ENCODE measurements at regions of chr20 and their contacts with region 1.

Region 1: DNA sequence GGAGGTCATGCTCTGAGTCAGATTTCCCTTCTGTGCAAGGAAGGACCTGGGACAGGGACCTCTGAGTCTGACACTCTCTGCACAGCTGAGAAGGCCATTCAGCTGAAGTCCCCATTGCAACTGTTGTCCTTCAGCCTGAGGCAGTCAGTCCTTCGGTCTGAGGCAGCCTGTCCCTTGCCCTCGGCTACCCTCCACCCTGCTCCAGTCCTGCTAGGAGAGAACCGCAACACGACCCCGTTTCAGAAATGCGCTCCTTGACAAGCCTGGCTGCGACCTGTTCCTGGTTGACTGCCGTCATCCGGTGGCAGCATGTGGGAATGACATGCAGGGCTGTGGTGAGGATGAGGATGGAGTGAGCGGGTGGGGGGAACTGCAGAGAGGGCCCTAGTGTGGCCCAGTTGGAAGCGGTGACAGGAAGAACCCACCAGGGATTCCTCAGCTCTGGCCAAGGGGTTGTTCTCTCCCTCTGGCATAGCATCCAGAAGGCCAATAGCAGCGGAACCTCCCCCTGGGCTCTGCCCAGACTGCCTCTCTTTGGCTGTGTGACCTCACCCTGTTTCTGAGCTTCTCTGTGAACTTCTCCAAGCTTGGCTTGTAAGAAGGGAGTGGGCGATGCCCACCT is 40.3 kb upstream of the ANGPT4 start:
- DNase-seq: peak; percentile 55 to 88 (median 74)
- ATAC-seq: peak; percentile 94
- H3K4me3 ChIP-seq: no peak overlapping the region
- H3K4me3 Mint-ChIP-seq: no peak overlapping the region
- H3K27ac ChIP-seq: no peak overlapping the region
- H3K27ac Mint-ChIP-seq: no peak overlapping the region
- H3K4me1 ChIP-seq: peaks cover 4% of the 10 kb centered on the region
- H3K4me1 Mint-ChIP-seq: peaks cover 3% of the 10 kb centered on the region
- H3K27me3 ChIP-seq: no peaks in the 10 kb centered on the region
- H3K27me3 Mint-ChIP-seq: peaks cover 47% of the 10 kb centered on the region
- CTCF ChIP-seq: peak; percentile 99

Region 2: GRCh38 chr20:805713-806112 is 150.7 kb before region 1 on chr20:
- CTCF ChIA-PET with region 1: interaction called, 25 read pairs
- POLR2A ChIA-PET with region 1: interaction called, 3 read pairs
- intact Hi-C with region 1: no loop called
- DNase-seq: no peak
- ATAC-seq: no peak
- H3K4me3 ChIP-seq: no peak overlapping the region
- H3K4me3 Mint-ChIP-seq: no peak overlapping the region
- H3K27ac ChIP-seq: no peak overlapping the region
- H3K27ac Mint-ChIP-seq: no peak overlapping the region
- H3K4me1 ChIP-seq: no peaks in the 10 kb centered on the region
- H3K4me1 Mint-ChIP-seq: no peaks in the 10 kb centered on the region
- H3K27me3 ChIP-seq: no peaks in the 10 kb centered on the region
- H3K27me3 Mint-ChIP-seq: peaks cover 14% of the 10 kb centered on the region
- CTCF ChIP-seq: no peak

Region 3: DNA sequence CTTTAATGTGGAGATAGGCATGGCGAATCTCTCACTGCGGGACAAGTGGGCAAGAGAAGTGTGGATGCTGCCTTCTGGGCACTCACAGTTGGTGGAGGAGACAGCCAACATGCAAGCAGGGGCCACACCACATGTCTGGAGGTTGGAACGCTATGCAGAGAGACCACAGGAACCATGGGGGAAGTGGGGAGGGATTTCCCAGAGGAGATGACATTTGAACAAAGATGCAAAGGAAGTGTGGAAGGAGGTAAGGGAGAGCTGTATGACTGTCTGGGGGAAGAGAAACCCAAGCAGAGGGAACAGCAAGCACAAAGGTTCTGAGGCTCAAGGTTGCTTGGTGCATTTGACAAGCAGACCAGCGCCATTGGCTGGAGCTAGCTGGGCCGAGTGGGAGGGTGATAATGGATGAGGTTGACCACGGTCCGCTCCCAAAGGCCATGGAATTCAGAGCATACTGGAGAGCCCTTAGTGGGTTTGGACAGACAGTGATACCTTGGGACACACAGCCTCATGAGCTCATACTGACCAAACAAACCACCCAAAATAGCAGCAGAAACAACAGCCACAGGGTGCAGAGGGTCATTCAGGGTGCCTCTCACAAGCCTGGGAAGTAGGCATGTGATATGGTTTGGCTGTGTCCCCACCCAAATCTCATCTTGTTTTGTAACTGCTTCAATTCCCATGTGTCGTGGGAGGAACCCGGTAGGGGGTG is 130.6 kb before region 1 on chr20:
- CTCF ChIA-PET with region 1: interaction called, 325 read pairs
- POLR2A ChIA-PET with region 1: no interaction called
- intact Hi-C with region 1: no loop called
- DNase-seq: no peak
- ATAC-seq: no peak
- H3K4me3 ChIP-seq: no peak overlapping the region
- H3K4me3 Mint-ChIP-seq: no peak overlapping the region
- H3K27ac ChIP-seq: no peak overlapping the region
- H3K27ac Mint-ChIP-seq: no peak overlapping the region
- H3K4me1 ChIP-seq: no peaks in the 10 kb centered on the region
- H3K4me1 Mint-ChIP-seq: no peaks in the 10 kb centered on the region
- H3K27me3 ChIP-seq: no peaks in the 10 kb centered on the region
- H3K27me3 Mint-ChIP-seq: no peaks in the 10 kb centered on the region
- CTCF ChIP-seq: no peak

Region 4: GRCh38 chr20:844473-845225 is 111.8 kb before region 1 on chr20:
- CTCF ChIA-PET with region 1: interaction called, 25 read pairs
- POLR2A ChIA-PET with region 1: no interaction called
- intact Hi-C with region 1: no loop called
- DNase-seq: peak; percentile 81 to 97 (median 90)
- ATAC-seq: peak; percentile 94
- H3K4me3 ChIP-seq: peak overlapping the region; percentile 65 to 71
- H3K4me3 Mint-ChIP-seq: peak overlapping the region; percentile 94
- H3K27ac ChIP-seq: peak overlapping the region; percentile 26 to 48
- H3K27ac Mint-ChIP-seq: peak overlapping the region; percentile 84
- H3K4me1 ChIP-seq: peaks cover 52% of the 10 kb centered on the region
- H3K4me1 Mint-ChIP-seq: peaks cover 54% of the 10 kb centered on the region
- H3K27me3 ChIP-seq: no peaks in the 10 kb centered on the region
- H3K27me3 Mint-ChIP-seq: no peaks in the 10 kb centered on the region
- CTCF ChIP-seq: no peak

Region 5: DNA sequence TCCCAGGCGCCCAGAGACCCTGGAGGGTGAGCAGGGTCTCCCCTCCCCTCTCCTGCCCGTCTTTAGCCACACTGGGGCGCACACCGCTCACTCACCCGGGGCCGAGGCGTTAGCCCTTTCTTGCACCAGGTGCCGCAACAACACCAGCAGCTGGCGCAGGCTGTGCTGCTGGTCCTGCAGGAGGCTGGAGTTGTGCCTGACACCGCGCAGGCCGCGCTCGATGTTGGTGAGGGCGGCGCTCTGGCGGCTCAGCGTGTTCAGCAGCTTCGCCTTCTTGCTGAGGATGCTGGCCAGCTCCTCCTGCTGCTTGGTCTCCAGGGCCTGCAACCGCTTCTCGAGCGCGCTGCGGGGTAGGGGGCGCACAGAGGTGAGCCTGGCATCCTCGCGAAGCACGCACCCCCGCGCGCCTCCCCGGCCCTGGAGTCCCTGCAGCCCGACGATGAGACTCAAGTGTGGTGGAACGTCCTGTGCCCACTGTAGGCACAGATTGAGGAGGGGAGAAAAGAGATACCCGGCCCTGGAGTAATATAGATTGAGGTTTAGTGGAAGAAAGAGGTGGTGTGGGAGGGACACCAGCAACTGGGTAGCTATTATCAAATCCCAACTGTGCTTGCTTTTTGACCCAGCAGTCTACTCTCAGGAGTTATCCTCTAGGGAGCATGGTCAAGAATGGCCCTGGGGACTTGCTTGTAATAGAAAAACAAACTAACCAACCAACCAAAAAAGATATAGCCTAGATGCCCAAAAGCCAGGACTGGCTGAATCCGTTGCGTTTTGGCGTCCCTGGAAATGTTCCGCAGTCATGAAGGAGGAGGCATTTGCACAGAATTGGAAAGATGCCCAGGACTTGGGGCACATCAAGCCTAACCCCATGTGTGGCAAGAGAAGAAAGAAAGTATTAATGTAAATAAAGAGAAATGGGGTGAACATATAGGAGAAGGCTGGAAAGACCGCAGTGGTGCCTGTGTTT is 71.2 kb before region 1 on chr20:
- CTCF ChIA-PET with region 1: interaction called, 17 read pairs
- POLR2A ChIA-PET with region 1: no interaction called
- intact Hi-C with region 1: no loop called
- DNase-seq: peak in 1 of 9 experiments; percentile 21
- ATAC-seq: no peak
- H3K4me3 ChIP-seq: no peak overlapping the region
- H3K4me3 Mint-ChIP-seq: no peak overlapping the region
- H3K27ac ChIP-seq: no peak overlapping the region
- H3K27ac Mint-ChIP-seq: no peak overlapping the region
- H3K4me1 ChIP-seq: no peaks in the 10 kb centered on the region
- H3K4me1 Mint-ChIP-seq: peaks cover 3% of the 10 kb centered on the region
- H3K27me3 ChIP-seq: no peaks in the 10 kb centered on the region
- H3K27me3 Mint-ChIP-seq: peaks cover 18% of the 10 kb centered on the region
- CTCF ChIP-seq: no peak

Region 6: GRCh38 chr20:944774-945410 is 11.5 kb before region 1 on chr20:
- CTCF ChIA-PET with region 1: interaction called, 13 read pairs
- POLR2A ChIA-PET with region 1: no interaction called
- intact Hi-C with region 1: no loop called
- DNase-seq: no peak
- ATAC-seq: no peak
- H3K4me3 ChIP-seq: no peak overlapping the region
- H3K4me3 Mint-ChIP-seq: no peak overlapping the region
- H3K27ac ChIP-seq: no peak overlapping the region
- H3K27ac Mint-ChIP-seq: no peak overlapping the region
- H3K4me1 ChIP-seq: no peaks in the 10 kb centered on the region
- H3K4me1 Mint-ChIP-seq: no peaks in the 10 kb centered on the region
- H3K27me3 ChIP-seq: no peaks in the 10 kb centered on the region
- H3K27me3 Mint-ChIP-seq: peaks cover 19% of the 10 kb centered on the region
- CTCF ChIP-seq: no peak

Region 7: DNA sequence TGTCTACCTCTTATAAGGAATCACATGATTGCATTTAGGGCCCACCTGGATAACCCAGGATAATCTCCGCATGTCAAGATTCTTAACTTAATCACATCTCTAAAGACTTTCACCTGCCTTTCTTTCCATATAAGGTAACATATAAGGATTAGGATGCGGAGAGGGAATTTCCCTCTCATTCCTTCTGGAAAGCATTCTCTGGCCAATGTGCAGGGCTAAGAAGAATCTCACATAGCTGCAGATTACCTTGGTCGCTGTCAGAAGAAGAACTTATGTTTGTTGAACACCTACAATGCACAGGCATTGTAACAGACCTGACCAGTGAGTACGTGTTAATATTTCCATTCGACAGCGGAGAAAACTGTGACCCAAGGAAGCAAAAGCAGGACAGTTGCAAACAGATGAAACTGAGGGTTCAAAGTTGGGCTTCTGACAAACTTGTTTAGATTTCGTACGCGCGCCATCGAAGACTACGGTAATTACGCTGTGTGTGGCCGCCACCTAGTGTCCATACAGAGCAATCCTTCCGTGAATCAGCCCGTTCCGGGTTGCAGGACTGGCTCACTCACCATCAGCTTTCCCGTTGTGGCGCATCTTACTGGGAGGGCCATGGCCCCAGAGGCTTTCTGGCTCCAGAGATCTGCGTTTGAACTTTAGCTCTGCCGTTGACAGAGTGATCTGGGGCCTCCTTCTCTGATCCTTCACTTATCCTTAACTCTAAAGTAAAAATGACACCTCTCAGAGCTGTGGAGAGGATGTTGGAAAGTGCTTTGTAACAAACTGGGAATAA is 256.4 kb after region 1 on chr20:
- CTCF ChIA-PET with region 1: interaction called, 11 read pairs
- POLR2A ChIA-PET with region 1: no interaction called
- intact Hi-C with region 1: loop called (anchors 2 to 5 kb)
- DNase-seq: peak; percentile 26 to 80 (median 68)
- ATAC-seq: peak; percentile 93
- H3K4me3 ChIP-seq: no peak overlapping the region
- H3K4me3 Mint-ChIP-seq: no peak overlapping the region
- H3K27ac ChIP-seq: no peak overlapping the region
- H3K27ac Mint-ChIP-seq: no peak overlapping the region
- H3K4me1 ChIP-seq: peaks cover 24% of the 10 kb centered on the region
- H3K4me1 Mint-ChIP-seq: peaks cover 34% of the 10 kb centered on the region
- H3K27me3 ChIP-seq: no peaks in the 10 kb centered on the region
- H3K27me3 Mint-ChIP-seq: peaks cover 8% of the 10 kb centered on the region
- CTCF ChIP-seq: peak; percentile 88

Region 8: GRCh38 chr20:1392823-1393506 is 436.5 kb after region 1 on chr20 and contains the start of gene FKBP1A:
- CTCF ChIA-PET with region 1: no interaction called
- POLR2A ChIA-PET with region 1: no interaction called
- intact Hi-C with region 1: no loop called
- DNase-seq: peak; percentile 85 to 97 (median 92)
- ATAC-seq: peak; percentile 84
- H3K4me3 ChIP-seq: peak within 1 kb of the TSS; percentile 62 to 73
- H3K4me3 Mint-ChIP-seq: peak within 1 kb of the TSS; percentile 94
- H3K27ac ChIP-seq: peak within 1 kb of the TSS; percentile 58 to 68
- H3K27ac Mint-ChIP-seq: peak within 1 kb of the TSS; percentile 96
- H3K4me1 ChIP-seq: peaks cover 47% of the 10 kb centered on the region
- H3K4me1 Mint-ChIP-seq: peaks cover 53% of the 10 kb centered on the region
- H3K27me3 ChIP-seq: no peaks in the 10 kb centered on the region
- H3K27me3 Mint-ChIP-seq: no peaks in the 10 kb centered on the region
- CTCF ChIP-seq: no peak
- total RNA-seq, gene FKBP1A: 34.0 to 36.8 TPM

Measured in CD8-positive, alpha-beta T cell (primary cell).